ENCODE measurements at regions of chr3 and their contacts with region 1.

Region 1: DNA sequence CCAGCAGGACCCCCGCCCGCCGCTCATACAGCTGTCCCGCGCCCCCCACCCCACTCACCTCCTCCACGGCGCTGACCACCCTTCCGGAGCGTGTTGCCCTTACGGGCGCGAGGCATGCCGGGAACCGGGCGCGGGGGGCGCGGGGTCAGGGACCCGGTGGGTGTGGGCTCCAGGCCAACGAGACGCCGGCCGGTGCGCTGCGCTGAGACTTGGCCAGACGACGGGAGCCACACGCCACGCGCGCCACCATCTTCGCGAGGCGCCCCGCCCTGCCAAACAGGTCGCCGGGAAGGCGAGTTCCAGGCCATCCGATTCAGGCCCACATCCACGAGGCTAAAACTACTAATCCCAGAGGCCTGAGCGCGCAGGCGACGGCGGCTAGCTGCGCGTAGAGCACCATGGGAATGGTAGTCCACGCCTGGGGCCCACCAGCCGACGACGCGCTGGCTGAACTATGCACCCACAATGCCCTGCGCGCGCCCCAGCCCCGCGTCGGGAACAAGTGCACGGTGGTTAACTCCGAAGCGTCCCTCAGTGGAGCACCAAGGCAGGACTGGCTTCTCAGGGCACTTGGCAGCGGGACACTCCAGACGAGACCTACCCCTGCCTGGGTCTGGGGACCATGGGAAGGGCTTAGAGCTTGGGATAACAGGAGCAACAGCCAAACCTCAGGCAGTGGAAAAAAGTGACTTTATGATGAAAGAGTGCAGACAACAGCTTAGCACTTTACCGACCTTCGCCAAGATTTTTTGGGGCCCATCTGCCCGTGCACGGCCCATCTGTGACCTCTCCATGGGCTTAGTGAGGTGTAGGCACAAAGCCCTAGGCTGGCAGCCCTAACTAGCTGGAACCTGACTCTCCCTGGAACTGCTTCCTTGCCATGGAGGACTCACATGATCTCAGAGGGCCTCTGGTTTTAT is at the start of gene IFRD2:
- DNase-seq: peak; percentile 91 to 94
- H3K4me3 ChIP-seq: peak within 1 kb of the TSS; percentile 62 to 95 (median 94)
- H3K27ac ChIP-seq: peak within 1 kb of the TSS; percentile 37; the same call in 1 of the 2 replicates
- H3K4me1 ChIP-seq: peaks cover 0 to 7% (median 5%) of the 10 kb centered on the region in 4 experiments; a peak in 4 of 7 replicates
- H3K27me3 ChIP-seq: no peaks in the 10 kb centered on the region; a peak in 1 of 7 replicates
- CTCF ChIP-seq: peak in 1 of 3 experiments; percentile 1; a peak in 1 of 4 replicates
- EP300 ChIP-seq: no peak
- POLR2A ChIP-seq: peak in 1 of 2 experiments; percentile 73; a peak in 2 of 3 replicates
- RAD21 ChIP-seq: no peak; a peak in 1 of 4 replicates
- total RNA-seq, gene IFRD2: 88.8 and 97.8 TPM in 2 replicates

Region 2: GRCh38 chr3:50272911-50273693 is 19.3 kb before region 1 on chr3:
- CTCF ChIA-PET with region 1: interaction called, 15 read pairs
- POLR2A ChIA-PET with region 1: interaction called, 122 read pairs
- DNase-seq: peak in 1 of 2 experiments; percentile 100
- H3K4me3 ChIP-seq: peak overlapping the region in 1 of 4 experiments; percentile 46; a peak in 1 of 8 replicates
- H3K27ac ChIP-seq: no peak overlapping the region
- H3K4me1 ChIP-seq: peaks cover 0 to 20% (median 19%) of the 10 kb centered on the region in 4 experiments; a peak in 6 of 7 replicates
- H3K27me3 ChIP-seq: peaks cover 27 to 50% (median 42%) of the 10 kb centered on the region in 4 experiments
- CTCF ChIP-seq: peak in 2 of 3 experiments; percentile 98 to 99; a peak in 3 of 4 replicates
- EP300 ChIP-seq: no peak
- POLR2A ChIP-seq: no peak
- RAD21 ChIP-seq: peak; percentile 99

Region 3: DNA sequence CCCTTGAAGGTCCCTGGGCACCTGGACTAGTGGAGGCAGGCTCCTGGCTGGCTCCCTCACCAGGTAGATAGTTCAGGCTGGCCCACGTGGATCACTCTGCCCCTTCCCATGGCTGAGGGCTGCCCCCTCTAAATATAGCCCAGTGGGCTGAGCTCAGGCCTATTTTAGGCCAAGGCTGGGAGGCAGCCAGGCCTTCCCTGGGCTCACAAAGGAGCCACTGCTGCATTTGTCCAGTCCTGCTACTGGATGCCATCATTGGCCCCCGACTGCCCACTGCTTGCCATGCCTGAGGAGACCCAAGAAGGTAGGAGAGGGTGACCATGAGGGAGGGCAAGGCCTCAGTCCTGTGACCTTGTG is 13.6 kb before region 1 on chr3 and contains the start of gene LSMEM2:
- CTCF ChIA-PET with region 1: interaction called, 15 read pairs
- POLR2A ChIA-PET with region 1: interaction called, 122 read pairs
- DNase-seq: no peak
- H3K4me3 ChIP-seq: no peak within 1 kb of the TSS
- H3K27ac ChIP-seq: no peak within 1 kb of the TSS
- H3K4me1 ChIP-seq: peaks cover 0 to 12% (median 7%) of the 10 kb centered on the region in 4 experiments; a peak in 5 of 7 replicates
- H3K27me3 ChIP-seq: peaks cover 20 to 41% (median 34%) of the 10 kb centered on the region in 4 experiments
- CTCF ChIP-seq: no peak
- EP300 ChIP-seq: no peak
- POLR2A ChIP-seq: no peak
- RAD21 ChIP-seq: no peak
- total RNA-seq, gene LSMEM2: 0.57 and 0.58 TPM in 2 replicates

Region 4: DNA sequence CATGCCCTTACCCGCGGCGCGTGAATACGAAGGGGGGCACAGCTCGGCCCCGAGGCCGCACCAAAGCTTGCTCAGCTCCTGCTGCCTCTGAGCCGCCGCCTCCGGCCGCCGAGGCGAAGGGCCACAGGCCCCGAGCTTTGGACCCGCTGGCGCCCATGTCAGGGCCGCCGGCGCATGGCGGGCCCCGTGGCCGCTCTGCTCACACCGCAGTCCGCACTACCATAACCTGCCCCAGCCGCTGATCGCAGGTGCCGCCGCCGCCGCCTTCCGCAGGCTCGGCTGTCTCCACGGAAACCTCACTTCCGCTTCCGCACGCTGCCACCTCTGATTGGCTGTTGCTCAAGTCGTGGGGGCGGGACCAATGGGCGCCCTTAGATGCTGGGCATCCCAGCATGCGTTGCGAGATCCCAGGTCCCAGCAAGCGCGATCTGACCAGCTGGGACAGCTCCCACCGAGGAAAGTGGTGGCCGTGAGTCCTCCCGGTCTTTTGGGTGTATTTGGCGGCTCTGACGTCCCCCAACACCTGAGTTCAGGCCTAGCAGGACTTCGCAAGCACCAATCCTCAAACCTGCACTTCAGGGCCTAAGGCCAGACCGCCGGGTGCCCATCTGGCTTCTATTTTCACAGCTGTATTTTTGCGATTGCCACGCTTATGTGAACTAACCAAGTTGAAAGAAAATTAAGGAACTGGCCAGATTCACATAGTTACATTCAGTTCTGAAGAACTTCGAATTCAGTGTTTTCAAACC is 35.7 kb after region 1 on chr3 and contains the start of gene TUSC2:
- CTCF ChIA-PET with region 1: interaction called, 17 read pairs
- POLR2A ChIA-PET with region 1: interaction called, 149 read pairs
- DNase-seq: peak; percentile 82 to 96
- H3K4me3 ChIP-seq: peak within 1 kb of the TSS; percentile 52 to 97 (median 90)
- H3K27ac ChIP-seq: peak within 1 kb of the TSS; percentile 49; the same call in 1 of the 2 replicates
- H3K4me1 ChIP-seq: peaks cover 0 to 19% (median 7%) of the 10 kb centered on the region in 4 experiments; a peak in 6 of 7 replicates
- H3K27me3 ChIP-seq: no peaks in the 10 kb centered on the region
- CTCF ChIP-seq: peak in 1 of 3 experiments; percentile 3; a peak in 1 of 4 replicates
- EP300 ChIP-seq: no peak
- POLR2A ChIP-seq: peak in 1 of 2 experiments; percentile 82; a peak in 1 of 3 replicates
- RAD21 ChIP-seq: no peak
- total RNA-seq, gene TUSC2: 30.8 and 33.3 TPM in 2 replicates

Region 5: DNA sequence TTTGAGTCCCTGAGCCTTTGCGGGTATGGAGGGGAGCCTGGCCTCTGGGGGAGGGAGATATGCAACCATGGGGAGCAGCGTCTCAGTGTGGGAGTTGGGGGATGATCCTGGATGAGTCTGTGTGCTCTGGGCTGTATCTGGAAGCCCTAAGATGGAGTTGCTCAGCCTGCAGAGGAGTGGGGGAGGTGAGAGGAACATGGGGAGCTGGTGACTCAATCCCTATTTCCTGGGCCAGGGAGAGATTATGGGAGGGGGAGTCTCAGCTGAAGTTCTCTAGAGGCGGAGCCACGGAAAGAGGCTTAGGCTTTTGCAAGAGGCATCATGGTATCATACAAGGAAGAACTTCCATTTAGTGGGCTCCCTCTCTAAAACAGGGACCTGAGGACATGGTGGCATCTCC is 126.4 kb after region 1 on chr3:
- CTCF ChIA-PET with region 1: no interaction called
- POLR2A ChIA-PET with region 1: no interaction called
- DNase-seq: no peak
- H3K4me3 ChIP-seq: no peak overlapping the region
- H3K27ac ChIP-seq: no peak overlapping the region
- H3K4me1 ChIP-seq: peaks cover 0 to 2% (median 0%) of the 10 kb centered on the region in 4 experiments; a peak in 1 of 7 replicates
- H3K27me3 ChIP-seq: no peaks in the 10 kb centered on the region; a peak in 1 of 7 replicates
- CTCF ChIP-seq: no peak
- EP300 ChIP-seq: no peak
- POLR2A ChIP-seq: no peak
- RAD21 ChIP-seq: no peak

Measured in H1 (cell line).